Left lung (tissue), 14 donors: ENCODE measurements at regions of chr3 and their contacts with region 1.

Region 1: GRCh38 chr3:107680698-107681097 is 157.9 kb downstream of the BBX start:
- DNase-seq: no peak
- ATAC-seq: peak; percentile 38
- H3K4me3 ChIP-seq: no peak overlapping the region
- H3K27ac ChIP-seq: peak overlapping the region in 1 of 2 donors; percentile 18
- H3K4me1 ChIP-seq: peaks cover 6 to 20% of the 10 kb centered on the region in 2 donors
- H3K27me3 ChIP-seq: no peaks in the 10 kb centered on the region
- CTCF ChIP-seq: no peak

Region 2: DNA sequence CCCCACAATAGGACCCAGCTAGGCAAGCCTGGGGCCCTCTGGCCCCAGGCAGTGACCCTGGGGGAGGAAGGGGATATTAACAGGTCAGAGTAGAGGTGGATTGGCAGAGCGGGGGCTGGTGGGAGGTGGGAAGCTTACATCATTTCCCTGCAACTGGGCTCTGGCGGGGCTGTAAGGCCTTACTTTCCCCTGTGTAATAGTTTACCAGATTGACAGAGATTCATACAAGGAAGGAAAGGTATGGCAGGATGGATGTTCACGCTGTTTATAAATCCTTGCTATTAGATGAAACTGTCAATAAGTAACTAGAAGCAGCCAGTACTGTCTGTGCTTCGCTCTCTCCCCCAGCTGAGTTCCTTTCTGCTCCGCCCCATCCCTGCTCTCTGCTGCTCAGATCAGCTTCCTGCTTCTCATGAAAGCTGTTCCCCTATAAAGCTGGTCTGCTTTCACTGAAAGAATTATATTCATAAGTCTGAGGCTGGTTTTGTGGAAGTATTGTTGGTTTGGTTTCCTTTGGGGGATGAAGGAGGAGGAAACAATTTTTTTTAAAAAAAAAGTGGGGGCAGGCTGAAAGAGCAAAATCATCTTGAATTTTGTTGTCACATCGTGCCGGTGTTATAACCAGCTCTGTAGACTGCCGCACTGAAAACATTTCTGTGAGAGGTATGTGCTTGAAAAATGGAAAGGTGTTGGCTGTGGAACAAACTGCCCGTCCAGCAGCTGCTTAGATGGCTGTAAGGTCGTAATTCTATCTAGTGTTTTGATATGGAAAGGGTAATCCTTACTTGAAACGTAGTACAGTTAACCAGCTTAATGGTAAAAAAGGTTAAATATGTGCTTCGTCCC is 81.5 kb before region 1 on chr3:
- intact Hi-C with region 1: no loop called
- DNase-seq: peak; percentile 26 to 65 (median 54)
- ATAC-seq: peak; percentile 94
- H3K4me3 ChIP-seq: peak overlapping the region; percentile 20 to 34
- H3K27ac ChIP-seq: peak overlapping the region; percentile 69 to 84
- H3K4me1 ChIP-seq: peaks cover 16 to 30% of the 10 kb centered on the region in 2 donors
- H3K27me3 ChIP-seq: no peaks in the 10 kb centered on the region
- CTCF ChIP-seq: no peak

Region 3: DNA sequence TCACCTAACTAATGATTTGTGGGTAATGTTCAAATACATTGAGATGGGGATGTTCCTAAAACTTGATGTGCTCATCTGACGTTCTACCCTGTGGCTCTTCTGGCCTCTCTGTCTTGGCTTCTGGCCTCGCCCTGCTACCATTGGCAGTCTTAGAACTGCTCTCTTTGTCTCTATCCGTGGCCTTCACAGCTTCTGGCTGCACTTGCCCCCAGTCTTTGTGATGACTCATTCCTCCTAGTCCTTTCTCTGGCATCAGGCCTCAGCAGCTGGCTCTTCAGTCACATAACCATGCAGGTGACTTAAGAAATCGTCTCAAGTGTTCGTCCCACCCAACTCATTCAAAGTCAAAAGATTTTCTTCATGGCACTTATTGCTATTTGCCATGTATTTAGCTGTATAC is 30.2 kb after region 1 on chr3:
- intact Hi-C with region 1: no loop called
- DNase-seq: peak in 1 of 4 donors; percentile 63
- ATAC-seq: peak; percentile 93
- H3K4me3 ChIP-seq: no peak overlapping the region
- H3K27ac ChIP-seq: peak overlapping the region in 1 of 2 donors; percentile 10
- H3K4me1 ChIP-seq: no peaks in the 10 kb centered on the region
- H3K27me3 ChIP-seq: no peaks in the 10 kb centered on the region
- CTCF ChIP-seq: no peak

Region 4: DNA sequence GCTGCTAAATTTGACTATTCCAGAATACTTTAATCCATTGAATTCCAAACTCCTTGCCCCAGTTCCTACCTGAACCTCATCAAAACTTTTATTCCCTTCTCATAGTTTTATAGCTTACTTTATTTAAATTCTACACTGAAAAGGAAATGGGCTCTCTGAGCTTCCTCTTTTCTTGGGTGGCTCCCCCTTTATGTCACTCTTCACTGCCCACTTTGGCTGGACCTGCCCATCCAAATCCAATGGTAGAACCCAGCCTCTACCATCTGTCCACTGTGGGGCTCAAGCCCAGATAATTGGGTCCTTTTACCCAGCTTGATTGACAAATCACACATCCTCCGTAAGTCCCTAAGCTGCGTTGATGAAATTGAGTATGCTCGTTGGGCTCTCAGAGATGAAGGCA is 58.5 kb after region 1 on chr3:
- intact Hi-C with region 1: loop called in 1 of 2 experiments (anchors 10 kb)
- DNase-seq: no peak
- ATAC-seq: no peak
- H3K4me3 ChIP-seq: no peak overlapping the region
- H3K27ac ChIP-seq: no peak overlapping the region
- H3K4me1 ChIP-seq: no peaks in the 10 kb centered on the region
- H3K27me3 ChIP-seq: no peaks in the 10 kb centered on the region
- CTCF ChIP-seq: no peak